HEK293 (cell line): ENCODE measurements at regions of chr3 and their contacts with region 1.

Region 1: DNA sequence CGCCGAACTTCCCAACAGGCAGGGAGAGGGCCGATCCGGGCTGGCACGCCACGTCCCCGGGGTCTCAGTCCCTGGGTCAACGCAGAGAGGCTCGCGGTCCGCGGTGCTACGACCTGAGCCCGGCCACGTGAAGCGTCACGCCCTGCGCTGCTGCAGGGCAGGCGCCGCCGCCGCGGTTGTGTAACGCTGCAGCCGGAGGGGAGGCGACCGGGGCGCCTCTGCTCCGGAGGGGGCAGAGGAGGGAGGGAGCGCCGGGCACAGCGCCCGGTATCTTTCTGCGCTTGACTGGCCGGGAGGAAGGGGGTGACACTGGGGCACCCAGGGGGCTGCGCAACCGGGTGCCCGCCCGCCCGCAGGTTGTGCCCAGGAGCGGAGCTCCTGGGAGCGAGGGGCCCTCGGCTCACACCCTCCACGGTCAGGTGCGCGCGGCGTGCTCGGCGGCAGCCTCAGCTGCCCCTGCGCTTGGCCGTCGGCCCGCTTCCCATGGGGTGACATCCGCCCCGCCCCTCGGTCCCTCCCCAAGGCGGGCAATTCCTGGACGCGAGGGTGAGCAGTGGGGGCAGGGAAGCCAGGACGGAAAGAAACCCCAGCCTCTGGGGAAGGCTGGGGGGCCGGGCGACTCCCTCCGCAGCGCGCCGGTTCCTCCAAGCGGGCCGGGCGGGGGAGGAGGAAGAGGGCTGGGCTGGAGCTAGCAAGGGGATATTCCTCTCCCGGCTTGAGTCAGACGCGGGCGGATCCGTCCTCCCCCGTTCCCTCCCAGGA is 852 bp upstream of the BHLHE40 start:
- H3K4me3 ChIP-seq: peak overlapping the region; percentile 62
- H3K27ac ChIP-seq: peak overlapping the region; percentile 99
- H3K4me1 ChIP-seq: peaks cover 7% of the 10 kb centered on the region
- CTCF ChIP-seq: peak; percentile 71; the same call in 1 of the 2 replicates

Region 2: DNA sequence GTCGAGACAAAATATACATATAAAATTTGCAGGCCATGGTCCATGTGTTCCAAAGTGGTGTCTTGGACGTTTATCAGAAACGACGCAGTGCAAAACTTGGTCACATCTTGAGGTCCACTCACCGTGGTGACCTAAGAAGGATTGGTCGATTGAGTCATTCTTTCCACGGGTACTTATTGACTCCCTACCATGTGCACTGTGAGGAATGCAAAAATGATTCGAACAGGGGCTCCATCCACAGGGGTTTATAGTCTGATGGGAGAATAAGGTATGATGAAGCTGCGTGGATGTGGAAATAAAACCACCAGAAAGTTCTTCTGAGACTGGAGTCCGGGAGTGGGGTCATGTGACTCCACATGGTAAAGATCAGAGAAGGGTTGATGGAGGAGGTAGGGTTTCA is 300.1 kb before region 1 on chr3:
- CTCF ChIA-PET with region 1: no interaction called
- POLR2A ChIA-PET with region 1: no interaction called
- H3K4me3 ChIP-seq: no peak overlapping the region
- H3K27ac ChIP-seq: no peak overlapping the region
- H3K4me1 ChIP-seq: peaks cover 4% of the 10 kb centered on the region
- CTCF ChIP-seq: no peak

Region 3: DNA sequence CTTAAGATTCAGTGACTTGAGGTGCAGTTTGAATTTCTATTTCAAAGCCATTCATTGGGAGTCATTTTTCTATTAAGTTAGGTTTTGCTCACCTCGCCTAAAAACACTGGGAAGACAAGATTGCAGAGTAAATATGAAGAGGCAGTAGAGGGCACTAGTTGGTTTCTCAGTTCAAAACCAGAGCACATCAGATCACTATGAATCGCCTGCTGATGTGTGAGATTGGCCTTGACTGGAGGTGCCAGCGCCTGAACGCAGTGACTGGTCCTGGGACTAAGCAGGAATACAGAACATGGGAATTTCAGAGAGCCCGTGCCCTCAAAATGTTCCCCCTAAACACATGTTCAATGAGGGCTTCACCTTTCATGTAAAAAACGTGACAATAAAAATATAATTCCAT is 256.3 kb before region 1 on chr3:
- CTCF ChIA-PET with region 1: interaction called, 52 read pairs
- POLR2A ChIA-PET with region 1: interaction called, 18 read pairs
- H3K4me3 ChIP-seq: no peak overlapping the region
- H3K27ac ChIP-seq: no peak overlapping the region
- H3K4me1 ChIP-seq: no peaks in the 10 kb centered on the region
- CTCF ChIP-seq: peak; percentile 27; the same call in 1 of the 2 replicates

Region 4: DNA sequence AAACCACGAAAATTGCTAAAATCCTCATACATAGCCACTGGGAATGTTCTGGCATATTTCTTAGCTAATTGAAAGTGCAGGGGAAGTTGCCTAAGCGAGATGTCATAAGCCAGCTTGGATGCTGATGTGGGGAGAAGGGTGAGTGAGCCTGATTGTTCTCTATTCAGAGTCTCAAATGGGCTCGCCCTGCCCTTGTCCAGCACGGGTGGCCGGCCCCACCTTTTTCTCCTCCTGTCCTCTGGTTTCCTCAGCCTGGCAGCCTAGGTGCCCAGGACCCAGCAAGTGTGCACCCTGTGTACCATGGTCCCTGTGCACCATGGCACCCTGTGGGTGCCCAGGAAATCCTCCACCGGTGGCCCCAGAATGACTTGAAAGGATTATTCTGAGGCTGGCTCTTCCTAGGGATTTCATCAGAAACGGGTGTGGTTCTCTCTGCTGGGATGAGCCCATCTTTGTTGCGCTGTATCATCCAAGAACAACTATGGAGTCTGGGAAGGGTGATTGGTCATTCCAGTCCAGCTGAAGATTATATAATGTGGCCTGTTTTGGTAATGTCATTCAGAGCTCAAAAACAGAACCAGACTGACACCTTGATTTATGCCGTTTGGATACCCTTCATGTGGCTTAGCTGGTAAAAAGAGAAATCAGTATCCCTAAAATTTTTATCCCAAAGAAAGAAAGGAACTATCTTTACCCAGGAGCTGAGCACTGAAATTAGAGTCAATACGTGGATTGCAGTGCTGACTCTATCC is 149.9 kb before region 1 on chr3:
- CTCF ChIA-PET with region 1: interaction called, 9 read pairs
- POLR2A ChIA-PET with region 1: interaction called, 10 read pairs
- H3K4me3 ChIP-seq: no peak overlapping the region
- H3K27ac ChIP-seq: no peak overlapping the region
- H3K4me1 ChIP-seq: peaks cover 3% of the 10 kb centered on the region
- CTCF ChIP-seq: no peak

Region 5: DNA sequence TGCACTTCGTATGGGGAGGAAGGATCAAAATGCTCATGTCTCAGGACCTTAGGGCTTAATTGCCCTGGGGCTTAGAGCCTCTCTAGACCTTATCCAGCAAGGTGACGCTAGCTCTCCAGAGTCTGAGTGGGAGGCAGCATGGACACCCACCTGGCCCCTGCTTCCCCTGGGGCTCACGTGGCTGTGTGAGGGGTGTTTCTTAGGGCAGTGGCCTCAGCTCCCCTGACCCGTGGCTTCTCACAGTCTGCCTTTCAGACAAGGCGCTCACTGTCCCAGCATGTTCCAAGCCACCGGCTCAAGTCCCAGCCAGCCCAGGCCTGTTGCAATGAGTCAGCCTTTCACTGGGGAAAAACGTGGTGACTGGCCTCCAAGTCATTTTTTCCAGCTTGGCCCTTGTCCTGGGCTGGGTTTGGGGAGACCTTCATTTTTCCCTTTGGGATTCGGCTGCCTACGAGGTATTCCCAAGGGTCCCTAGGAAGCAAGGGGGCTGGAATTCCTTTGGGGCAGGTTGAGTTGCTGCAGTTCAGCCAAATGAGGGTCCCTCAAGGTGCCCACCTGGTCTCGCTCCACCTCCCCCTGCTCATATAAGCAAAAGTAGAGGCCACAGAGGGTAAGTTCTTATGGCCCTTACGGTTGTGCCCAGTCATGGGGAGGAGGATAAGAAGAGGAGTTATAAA is 16.6 kb after region 1 on chr3:
- CTCF ChIA-PET with region 1: interaction called, 12 read pairs
- POLR2A ChIA-PET with region 1: interaction called, 20 read pairs
- H3K4me3 ChIP-seq: no peak overlapping the region
- H3K27ac ChIP-seq: peak overlapping the region; percentile 32; the same call in 1 of the 2 replicates
- H3K4me1 ChIP-seq: peaks cover 5% of the 10 kb centered on the region; the same call in 1 of the 2 replicates
- CTCF ChIP-seq: no peak

Region 6: DNA sequence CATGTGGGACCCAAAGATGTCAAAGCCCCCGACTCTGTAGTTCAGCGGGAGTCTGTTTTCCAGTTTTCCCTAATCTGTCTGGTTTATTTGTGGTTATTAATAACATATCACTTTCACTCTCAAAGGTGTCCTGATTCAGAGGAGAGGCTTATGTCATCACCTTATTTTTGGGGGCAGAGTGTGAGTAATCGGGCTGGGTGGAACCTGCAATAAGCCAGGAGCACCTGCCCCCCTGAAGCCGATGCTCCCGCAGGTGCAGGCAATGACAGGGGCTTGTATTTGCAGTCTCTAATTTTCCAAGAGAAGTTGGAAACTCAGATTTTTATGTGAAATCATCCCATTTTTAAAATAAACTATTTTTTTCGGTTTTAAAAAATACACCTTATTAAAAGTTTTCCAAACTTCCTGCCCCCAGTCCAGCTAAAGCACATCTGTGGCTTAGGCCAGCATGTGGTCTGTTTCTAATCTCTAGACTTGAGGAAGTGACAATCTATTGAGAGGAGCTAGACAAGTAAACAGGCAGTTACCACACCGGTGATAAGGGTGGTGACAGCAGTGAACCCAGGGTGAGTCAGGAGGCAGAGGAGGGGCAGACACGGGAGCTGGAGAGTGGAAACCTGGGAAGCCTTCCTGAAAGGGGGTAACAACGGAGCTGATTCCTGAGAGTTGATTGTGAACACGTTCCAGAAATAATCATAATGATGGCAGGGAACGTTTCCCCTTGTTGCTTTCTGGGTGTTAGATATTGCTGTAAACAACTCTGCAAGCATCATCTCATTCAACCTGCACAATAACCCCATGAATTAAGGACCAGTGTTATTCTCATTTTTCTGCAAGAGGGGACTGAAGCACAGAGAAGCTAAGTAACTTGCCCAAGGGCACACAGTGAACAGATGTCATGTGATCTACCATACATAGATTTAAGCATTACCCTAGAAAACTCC is 38.1 kb after region 1 on chr3:
- CTCF ChIA-PET with region 1: interaction called, 46 read pairs
- POLR2A ChIA-PET with region 1: interaction called, 332 read pairs
- H3K4me3 ChIP-seq: no peak overlapping the region
- H3K27ac ChIP-seq: peak overlapping the region; percentile 39; the same call in 1 of the 2 replicates
- H3K4me1 ChIP-seq: peaks cover 20% of the 10 kb centered on the region
- CTCF ChIP-seq: no peak

Region 7: GRCh38 chr3:5057857-5058324 is 79.5 kb after region 1 on chr3:
- CTCF ChIA-PET with region 1: interaction called, 19 read pairs
- POLR2A ChIA-PET with region 1: interaction called, 17 read pairs
- H3K4me3 ChIP-seq: no peak overlapping the region
- H3K27ac ChIP-seq: 0 out of 2 replicates have a peak overlapping the region, but pooled peaks have one; percentile 10
- H3K4me1 ChIP-seq: peaks cover 3% of the 10 kb centered on the region
- CTCF ChIP-seq: peak; percentile 69